Endothelial cell of umbilical vein (primary cell): ENCODE measurements at regions of chr4 and their contacts with region 1.

Region 1: DNA sequence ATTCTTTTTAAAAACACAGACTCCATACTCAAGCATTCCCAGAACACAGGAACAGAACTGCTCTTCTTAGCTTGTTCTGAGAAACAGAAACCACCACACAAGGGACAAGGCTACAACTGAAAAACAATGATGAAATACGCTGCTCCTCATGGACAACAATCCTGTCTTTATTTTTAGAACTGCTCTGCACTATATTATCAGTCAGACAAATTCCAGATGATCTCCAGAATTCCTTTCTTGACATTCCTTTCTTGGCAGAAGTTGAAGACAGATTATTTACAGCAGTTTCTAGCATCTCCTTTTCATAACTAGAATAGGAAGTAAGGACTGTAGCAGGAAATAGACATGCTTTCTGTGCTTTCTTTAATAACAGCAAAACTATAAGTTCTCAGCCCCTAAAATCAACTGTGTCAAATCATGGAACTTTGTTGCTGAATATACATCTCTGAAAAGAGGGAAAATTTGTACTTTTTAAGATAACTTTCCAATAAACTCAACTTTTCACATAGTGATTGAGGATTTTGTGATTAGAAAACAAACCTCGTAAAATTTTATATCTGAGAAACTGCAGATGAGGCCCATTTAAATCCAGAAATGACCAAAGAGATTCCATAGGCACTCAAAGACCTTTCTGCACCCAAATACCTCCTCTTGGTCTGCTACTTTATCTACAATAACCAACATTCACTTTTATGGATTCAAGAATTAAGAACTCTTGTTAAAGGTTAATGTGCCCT is 35.9 kb downstream of the ANTXR2 start:
- DNase-seq: peak; percentile 64
- H3K4me3 ChIP-seq: peak overlapping the region in 1 of 3 experiments; percentile 37
- H3K27ac ChIP-seq: peak overlapping the region; percentile 70
- H3K4me1 ChIP-seq: peaks cover 38% of the 10 kb centered on the region
- H3K27me3 ChIP-seq: no peaks in the 10 kb centered on the region
- CTCF ChIP-seq: no peak
- POLR2A ChIP-seq: no peak

Region 2: GRCh38 chr4:80007745-80008149 is 29.4 kb before region 1 on chr4:
- CTCF ChIA-PET with region 1: no interaction called
- POLR2A ChIA-PET with region 1: no interaction called
- dilution Hi-C with region 1: no loop called
- intact Hi-C with region 1: loop called (anchors 2 kb)
- DNase-seq: peak; percentile 83
- H3K4me3 ChIP-seq: no peak overlapping the region
- H3K27ac ChIP-seq: peak overlapping the region; percentile 70
- H3K4me1 ChIP-seq: peaks cover 52% of the 10 kb centered on the region
- H3K27me3 ChIP-seq: no peaks in the 10 kb centered on the region
- CTCF ChIP-seq: no peak
- POLR2A ChIP-seq: peak; percentile 21

Region 3: DNA sequence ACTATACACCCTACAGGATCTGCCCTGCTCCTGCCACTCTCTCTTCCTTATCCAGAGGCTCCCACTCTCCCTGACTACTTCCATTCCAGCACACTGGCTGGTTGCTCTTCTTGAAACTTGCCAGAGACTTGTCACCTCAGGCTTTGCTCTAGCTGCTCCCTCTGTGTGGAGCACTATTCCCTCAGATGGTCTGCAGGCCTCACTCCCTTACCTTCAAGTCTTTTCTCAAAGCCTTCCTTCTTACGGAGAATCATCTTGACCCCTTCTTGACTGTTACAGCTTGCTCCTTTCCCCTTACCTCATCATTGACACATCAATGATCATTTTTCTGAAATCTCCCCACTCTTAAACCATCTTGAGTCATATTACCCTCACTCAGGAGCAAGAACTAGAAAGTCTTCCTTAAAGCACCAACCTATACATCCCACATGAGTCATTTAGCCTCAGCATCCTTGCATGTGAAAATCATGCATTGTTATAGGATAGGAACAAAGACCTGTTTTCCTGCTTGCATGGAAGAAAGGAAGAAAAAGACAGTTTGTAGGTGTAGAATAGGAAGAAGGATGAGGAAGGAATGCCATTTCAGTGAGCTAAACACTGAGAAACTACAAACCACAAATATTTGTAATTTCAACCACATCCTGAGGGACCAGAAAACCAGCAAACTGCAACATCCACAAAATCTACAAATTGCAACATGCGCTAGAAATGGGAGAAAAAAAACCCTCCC is 19.8 kb before region 1 on chr4:
- CTCF ChIA-PET with region 1: interaction called, 10 read pairs
- POLR2A ChIA-PET with region 1: no interaction called
- dilution Hi-C with region 1: no loop called
- intact Hi-C with region 1: no loop called
- DNase-seq: peak; percentile 3
- H3K4me3 ChIP-seq: no peak overlapping the region
- H3K27ac ChIP-seq: peak overlapping the region; percentile 63
- H3K4me1 ChIP-seq: peaks cover 29% of the 10 kb centered on the region
- H3K27me3 ChIP-seq: no peaks in the 10 kb centered on the region
- CTCF ChIP-seq: no peak
- POLR2A ChIP-seq: no peak

Region 4: DNA sequence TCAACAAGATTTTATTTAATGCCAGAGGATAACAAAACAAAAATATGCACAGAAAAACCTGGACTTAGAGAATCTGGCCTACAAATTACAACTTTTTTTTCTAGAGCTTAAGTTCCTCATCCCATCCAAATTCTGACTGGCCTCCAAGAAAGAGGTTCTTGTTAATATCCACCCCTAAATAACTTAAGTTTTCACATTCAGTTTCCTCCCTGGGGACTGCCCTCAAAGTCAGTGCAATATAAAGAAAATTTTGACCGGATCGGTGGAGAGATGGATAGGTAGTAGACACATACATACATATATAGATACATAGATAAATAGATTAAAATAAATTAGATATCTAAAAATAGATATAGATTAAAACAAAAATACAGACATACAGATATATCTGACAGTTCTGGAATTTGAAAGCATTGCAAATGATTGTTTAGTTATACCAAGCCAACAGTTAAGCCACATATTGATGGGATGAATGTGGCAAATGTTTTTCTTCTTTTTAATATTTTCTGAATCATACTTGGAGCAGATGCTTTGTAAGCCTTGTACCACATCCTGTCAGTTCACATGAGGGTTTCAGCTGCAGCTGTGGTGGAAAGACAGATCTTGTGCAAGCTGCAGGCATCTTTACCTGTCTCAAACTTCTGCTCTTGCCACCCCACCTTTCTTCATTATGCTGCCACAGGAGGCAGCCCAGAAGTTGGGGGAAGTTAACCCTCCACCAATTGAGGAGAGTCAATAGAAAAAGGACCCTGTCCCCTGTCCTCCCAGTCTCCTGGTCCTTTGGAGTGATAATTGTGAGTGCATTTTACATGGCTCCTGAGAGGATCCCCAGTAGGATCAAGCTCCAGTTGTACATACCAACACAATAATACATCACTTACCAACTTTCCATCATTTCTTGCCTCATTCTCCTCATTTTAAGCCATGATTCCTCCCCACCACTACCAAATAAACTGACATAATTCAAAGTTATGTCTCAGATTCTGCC is 101.7 kb after region 1 on chr4:
- CTCF ChIA-PET with region 1: no interaction called
- POLR2A ChIA-PET with region 1: no interaction called
- dilution Hi-C with region 1: no loop called
- intact Hi-C with region 1: no loop called
- DNase-seq: no peak
- H3K4me3 ChIP-seq: no peak overlapping the region
- H3K27ac ChIP-seq: no peak overlapping the region
- H3K4me1 ChIP-seq: peaks cover 24% of the 10 kb centered on the region
- H3K27me3 ChIP-seq: no peaks in the 10 kb centered on the region
- CTCF ChIP-seq: no peak
- POLR2A ChIP-seq: no peak

Region 5: DNA sequence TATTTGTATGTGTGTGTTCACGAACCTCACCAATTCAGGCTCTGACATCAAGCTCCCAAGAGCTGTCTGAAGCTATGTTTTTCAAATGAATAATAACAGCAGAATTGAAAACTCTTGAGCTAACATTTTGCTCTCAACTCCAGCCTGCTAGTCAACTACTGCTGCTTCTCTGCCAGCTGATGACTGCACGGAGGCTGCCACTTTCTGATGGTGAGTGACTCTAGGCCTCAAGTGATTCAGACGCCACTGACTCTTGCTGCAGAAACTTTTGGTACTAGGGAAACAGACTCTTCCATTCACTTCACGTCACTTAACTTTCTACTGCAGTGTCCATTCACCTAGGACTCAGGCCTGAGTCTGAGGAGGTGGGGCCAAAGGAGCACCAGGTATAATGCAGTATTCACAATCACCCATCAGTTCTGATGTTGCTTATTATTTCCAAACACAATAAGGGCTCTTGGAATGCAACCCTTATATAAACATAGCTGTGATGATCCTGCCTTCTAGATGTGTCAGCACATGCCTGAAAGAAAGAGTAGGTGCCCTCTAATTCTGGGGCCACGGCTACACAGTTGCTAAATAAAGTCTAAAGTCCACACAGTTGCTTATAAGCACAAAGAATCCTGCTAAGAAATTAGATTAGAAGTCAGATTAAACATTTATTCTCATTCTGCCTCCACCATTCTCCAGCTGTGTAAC is 176.1 kb after region 1 on chr4:
- CTCF ChIA-PET with region 1: no interaction called
- POLR2A ChIA-PET with region 1: no interaction called
- dilution Hi-C with region 1: no loop called
- intact Hi-C with region 1: no loop called
- DNase-seq: no peak
- H3K4me3 ChIP-seq: no peak overlapping the region
- H3K27ac ChIP-seq: no peak overlapping the region
- H3K4me1 ChIP-seq: no peaks in the 10 kb centered on the region
- H3K27me3 ChIP-seq: peaks cover 11 to 24% of the 10 kb centered on the region in 2 experiments
- CTCF ChIP-seq: no peak
- POLR2A ChIP-seq: no peak